ENCODE measurements at regions of chr2 and their contacts with region 1.

Region 1: GRCh38 chr2:177604271-177605065 is 211.9 kb downstream of the AGPS start:
- DNase-seq: peak; percentile 23
- H3K4me3 ChIP-seq: no peak overlapping the region
- H3K27ac ChIP-seq: no peak overlapping the region
- H3K4me1 ChIP-seq: no peaks in the 10 kb centered on the region
- H3K27me3 ChIP-seq: no peaks in the 10 kb centered on the region
- CTCF ChIP-seq: peak; percentile 62 to 76

Region 2: GRCh38 chr2:177380181-177380580 is 224.3 kb before region 1 on chr2:
- CTCF ChIA-PET with region 1: no interaction called
- dilution Hi-C with region 1: no loop called
- in situ Hi-C with region 1: no loop called
- intact Hi-C with region 1: no loop called
- DNase-seq: no peak
- H3K4me3 ChIP-seq: no peak overlapping the region
- H3K27ac ChIP-seq: no peak overlapping the region
- H3K4me1 ChIP-seq: no peaks in the 10 kb centered on the region
- H3K27me3 ChIP-seq: no peaks in the 10 kb centered on the region
- CTCF ChIP-seq: no peak

Region 3: GRCh38 chr2:177434475-177434874 is 170.0 kb before region 1 on chr2:
- CTCF ChIA-PET with region 1: no interaction called
- dilution Hi-C with region 1: no loop called
- in situ Hi-C with region 1: no loop called
- intact Hi-C with region 1: no loop called
- DNase-seq: no peak
- H3K4me3 ChIP-seq: no peak overlapping the region
- H3K27ac ChIP-seq: no peak overlapping the region
- H3K4me1 ChIP-seq: peaks cover 12% of the 10 kb centered on the region
- H3K27me3 ChIP-seq: no peaks in the 10 kb centered on the region
- CTCF ChIP-seq: no peak

Region 4: GRCh38 chr2:177489719-177490301 is 114.7 kb before region 1 on chr2:
- CTCF ChIA-PET with region 1: interaction called, 3 read pairs
- dilution Hi-C with region 1: no loop called
- in situ Hi-C with region 1: loop called in 1 of 2 experiments (anchors 25 kb)
- intact Hi-C with region 1: loop called (anchors 1 kb)
- DNase-seq: no peak
- H3K4me3 ChIP-seq: no peak overlapping the region
- H3K27ac ChIP-seq: no peak overlapping the region
- H3K4me1 ChIP-seq: no peaks in the 10 kb centered on the region
- H3K27me3 ChIP-seq: no peaks in the 10 kb centered on the region
- CTCF ChIP-seq: peak; percentile 48 to 61

Region 5: DNA sequence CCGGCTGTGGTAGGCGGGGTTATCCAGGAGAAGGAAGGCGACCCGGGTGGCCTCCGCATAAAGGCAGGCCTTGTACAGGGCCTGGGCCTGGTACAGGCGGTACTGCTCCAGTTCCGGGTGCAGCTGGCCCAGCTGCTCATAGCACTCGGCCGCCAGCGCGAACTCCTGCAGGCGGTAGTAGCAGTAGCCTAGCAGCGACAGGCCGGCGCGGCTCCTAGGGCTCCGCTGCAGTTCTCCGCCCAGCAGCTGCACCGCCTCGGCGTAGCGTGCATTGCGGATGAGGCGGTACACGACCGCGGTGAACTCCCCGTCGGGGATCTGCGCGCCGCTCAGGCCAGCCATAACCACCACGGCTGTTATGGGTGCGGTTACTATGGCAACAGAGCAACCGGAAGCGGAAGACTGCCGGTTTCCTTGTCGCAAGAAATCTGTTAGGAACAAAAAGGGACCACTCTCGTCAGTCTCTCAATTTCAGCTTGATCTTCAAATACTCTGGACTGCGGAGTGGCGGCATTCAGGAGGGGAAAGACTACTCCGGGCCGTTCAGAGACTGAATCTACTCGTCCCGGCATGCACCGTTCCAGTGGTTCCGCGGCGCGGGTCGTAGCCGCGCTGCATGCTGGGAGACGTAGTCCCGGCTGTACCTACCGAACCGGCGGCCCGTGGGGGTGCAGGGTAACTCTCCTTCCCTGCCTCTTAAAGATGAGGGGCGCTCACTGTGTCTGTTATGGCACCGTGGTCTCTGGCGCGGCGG is 51.9 kb before region 1 on chr2:
- CTCF ChIA-PET with region 1: no interaction called
- dilution Hi-C with region 1: no loop called
- in situ Hi-C with region 1: no loop called
- intact Hi-C with region 1: loop called (anchors 5 kb)
- DNase-seq: peak; percentile 85
- H3K4me3 ChIP-seq: peak overlapping the region; percentile 65 to 74 (median 71)
- H3K27ac ChIP-seq: peak overlapping the region; percentile 100
- H3K4me1 ChIP-seq: no peaks in the 10 kb centered on the region
- H3K27me3 ChIP-seq: no peaks in the 10 kb centered on the region
- CTCF ChIP-seq: no peak

Region 6: GRCh38 chr2:177724398-177725287 is 120.2 kb after region 1 on chr2:
- CTCF ChIA-PET with region 1: no interaction called
- dilution Hi-C with region 1: no loop called
- in situ Hi-C with region 1: no loop called
- intact Hi-C with region 1: loop called (anchors 5 kb)
- DNase-seq: peak; percentile 15
- H3K4me3 ChIP-seq: no peak overlapping the region
- H3K27ac ChIP-seq: no peak overlapping the region
- H3K4me1 ChIP-seq: no peaks in the 10 kb centered on the region
- H3K27me3 ChIP-seq: peaks cover 2% of the 10 kb centered on the region
- CTCF ChIP-seq: peak; percentile 91 to 95